ENCODE measurements at regions of chr17 and their contacts with region 1.

Region 1: GRCh38 chr17:61412143-61412859 is 12.7 kb downstream of the TBX2 start:
- DNase-seq: peak; percentile 70
- H3K4me3 ChIP-seq: peak overlapping the region; percentile 6 to 43 (median 31)
- H3K27ac ChIP-seq: no peak overlapping the region
- H3K4me1 ChIP-seq: peaks cover 14% of the 10 kb centered on the region
- H3K27me3 ChIP-seq: peaks cover 34 to 37% of the 10 kb centered on the region in 2 experiments
- CTCF ChIP-seq: peak; percentile 94 to 99
- POLR2A ChIP-seq: no peak

Region 2: GRCh38 chr17:60971515-60972369 is 440.6 kb before region 1 on chr17:
- CTCF ChIA-PET with region 1: interaction called, 24 read pairs
- POLR2A ChIA-PET with region 1: no interaction called
- dilution Hi-C with region 1: no loop called
- intact Hi-C with region 1: loop called (anchors 1 kb)
- DNase-seq: peak; percentile 56
- H3K4me3 ChIP-seq: no peak overlapping the region
- H3K27ac ChIP-seq: no peak overlapping the region
- H3K4me1 ChIP-seq: no peaks in the 10 kb centered on the region
- H3K27me3 ChIP-seq: no peaks in the 10 kb centered on the region
- CTCF ChIP-seq: peak; percentile 57 to 69
- POLR2A ChIP-seq: no peak

Region 3: DNA sequence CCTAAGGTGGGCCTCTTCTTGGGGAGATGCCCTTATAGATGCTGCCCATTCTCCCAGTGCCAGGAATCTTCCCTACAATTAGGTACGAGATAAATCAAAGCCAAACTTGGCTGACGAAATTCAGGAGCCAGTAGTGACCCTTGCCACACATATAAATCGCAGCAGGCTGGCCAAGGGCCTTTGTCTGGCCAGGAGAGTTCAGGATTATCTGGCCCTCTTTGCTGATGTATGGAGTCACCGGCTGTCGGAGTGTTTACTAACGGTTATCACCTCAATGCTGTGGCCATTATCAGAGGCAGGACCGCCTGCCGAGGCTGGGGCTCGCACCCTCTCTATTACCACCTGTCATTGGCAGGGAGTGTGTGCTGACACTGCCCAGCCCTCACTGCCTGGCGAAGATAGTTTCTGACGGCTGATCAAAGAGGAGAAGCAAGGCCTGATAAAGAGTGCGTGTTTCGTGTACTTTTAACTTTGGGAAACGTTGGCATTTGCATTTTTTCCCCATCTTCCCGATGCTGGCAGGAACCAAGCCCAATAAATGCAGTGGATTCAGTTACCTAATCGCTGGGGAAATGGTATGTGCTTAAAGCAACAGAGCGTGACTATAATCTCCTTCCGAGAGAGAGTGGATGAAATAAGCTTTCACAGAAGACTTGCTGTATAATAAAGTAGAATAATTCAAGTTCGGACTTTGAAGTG is 45.4 kb before region 1 on chr17:
- CTCF ChIA-PET with region 1: no interaction called
- POLR2A ChIA-PET with region 1: no interaction called
- dilution Hi-C with region 1: no loop called
- intact Hi-C with region 1: no loop called
- DNase-seq: no peak
- H3K4me3 ChIP-seq: no peak overlapping the region
- H3K27ac ChIP-seq: no peak overlapping the region
- H3K4me1 ChIP-seq: no peaks in the 10 kb centered on the region
- H3K27me3 ChIP-seq: peaks cover 3 to 13% of the 10 kb centered on the region in 2 experiments
- CTCF ChIP-seq: no peak
- POLR2A ChIP-seq: no peak

Region 4: GRCh38 chr17:61436273-61436672 is 24.0 kb after region 1 on chr17:
- CTCF ChIA-PET with region 1: no interaction called
- POLR2A ChIA-PET with region 1: no interaction called
- dilution Hi-C with region 1: no loop called
- intact Hi-C with region 1: no loop called
- DNase-seq: no peak
- H3K4me3 ChIP-seq: no peak overlapping the region
- H3K27ac ChIP-seq: no peak overlapping the region
- H3K4me1 ChIP-seq: no peaks in the 10 kb centered on the region
- H3K27me3 ChIP-seq: peaks cover 10% of the 10 kb centered on the region in 2 experiments
- CTCF ChIP-seq: no peak
- POLR2A ChIP-seq: no peak

Region 5: DNA sequence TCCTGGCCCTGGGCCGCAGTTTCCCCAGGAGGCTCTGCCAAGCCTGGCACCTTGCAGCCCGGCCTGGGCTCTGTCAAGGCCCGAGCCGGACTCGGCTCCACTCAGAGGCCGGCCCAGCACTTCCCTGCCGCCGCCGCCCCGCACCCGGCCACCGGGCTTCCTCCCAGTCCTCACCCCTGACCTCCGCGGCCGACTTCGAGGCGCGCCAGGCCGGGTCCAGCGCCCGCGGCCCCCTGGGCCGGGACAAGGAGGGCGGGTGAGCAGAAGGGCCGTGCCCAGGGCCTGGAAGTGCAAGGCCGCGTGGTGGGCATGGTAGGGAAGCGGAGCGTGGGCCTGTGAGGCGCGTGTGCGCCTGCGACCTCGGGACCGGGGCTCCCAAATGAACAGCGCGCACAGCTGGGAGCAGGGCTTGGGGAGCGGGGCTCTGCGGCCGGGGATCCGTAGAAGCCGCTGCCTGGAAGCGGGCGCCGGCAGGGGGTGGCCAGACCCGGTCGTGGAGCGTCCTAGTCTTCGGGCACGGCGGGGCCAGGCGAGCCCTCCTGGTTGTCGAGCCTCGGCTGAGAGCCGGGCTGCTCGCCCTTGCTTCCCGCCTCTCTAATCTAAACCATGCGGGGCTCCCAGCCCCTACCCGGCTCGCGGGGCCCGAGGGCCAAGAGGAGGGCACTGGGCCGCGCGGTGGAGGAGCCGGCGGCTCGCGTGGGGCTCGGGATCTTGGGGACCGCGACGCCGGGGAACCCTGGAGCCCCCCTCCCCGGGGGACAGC is 39.4 kb after region 1 on chr17:
- CTCF ChIA-PET with region 1: interaction called, 3 read pairs
- POLR2A ChIA-PET with region 1: no interaction called
- dilution Hi-C with region 1: no loop called
- intact Hi-C with region 1: loop called (anchors 2 kb)
- DNase-seq: no peak
- H3K4me3 ChIP-seq: no peak overlapping the region
- H3K27ac ChIP-seq: no peak overlapping the region
- H3K4me1 ChIP-seq: peaks cover 3% of the 10 kb centered on the region
- H3K27me3 ChIP-seq: peaks cover 68 to 90% of the 10 kb centered on the region in 2 experiments
- CTCF ChIP-seq: no peak
- POLR2A ChIP-seq: no peak

Region 6: GRCh38 chr17:61556224-61557188 is 144.2 kb after region 1 on chr17:
- CTCF ChIA-PET with region 1: interaction called, 18 read pairs
- POLR2A ChIA-PET with region 1: no interaction called
- dilution Hi-C with region 1: no loop called
- intact Hi-C with region 1: loop called (anchors 1 kb)
- DNase-seq: no peak
- H3K4me3 ChIP-seq: no peak overlapping the region
- H3K27ac ChIP-seq: no peak overlapping the region
- H3K4me1 ChIP-seq: no peaks in the 10 kb centered on the region
- H3K27me3 ChIP-seq: peaks cover 8 to 10% of the 10 kb centered on the region in 2 experiments
- CTCF ChIP-seq: no peak
- POLR2A ChIP-seq: no peak

Region 7: DNA sequence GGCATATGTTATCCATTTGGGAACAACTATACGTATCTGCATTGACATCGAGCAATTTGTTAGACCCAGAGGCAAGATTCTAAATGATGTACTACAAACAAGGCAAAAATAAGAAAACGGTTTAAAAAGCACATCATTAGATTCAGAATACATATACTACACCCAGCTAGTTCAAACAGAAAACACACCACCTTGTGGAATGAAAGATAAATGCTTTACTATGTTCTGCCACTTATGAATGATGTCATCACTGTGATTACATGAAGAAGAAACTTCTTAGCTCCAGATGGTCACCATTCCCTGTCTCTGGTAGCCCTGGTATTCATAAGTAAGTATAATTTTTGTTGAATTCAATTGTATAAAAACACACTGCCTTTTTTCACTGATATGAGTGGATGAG is 170.9 kb after region 1 on chr17:
- CTCF ChIA-PET with region 1: interaction called, 87 read pairs
- POLR2A ChIA-PET with region 1: interaction called, 3 read pairs
- dilution Hi-C with region 1: no loop called
- intact Hi-C with region 1: loop called (anchors 1 kb)
- DNase-seq: peak; percentile 36
- H3K4me3 ChIP-seq: no peak overlapping the region
- H3K27ac ChIP-seq: no peak overlapping the region
- H3K4me1 ChIP-seq: no peaks in the 10 kb centered on the region
- H3K27me3 ChIP-seq: peaks cover 11 to 30% of the 10 kb centered on the region in 2 experiments
- CTCF ChIP-seq: peak; percentile 11 to 25
- POLR2A ChIP-seq: no peak

Region 8: DNA sequence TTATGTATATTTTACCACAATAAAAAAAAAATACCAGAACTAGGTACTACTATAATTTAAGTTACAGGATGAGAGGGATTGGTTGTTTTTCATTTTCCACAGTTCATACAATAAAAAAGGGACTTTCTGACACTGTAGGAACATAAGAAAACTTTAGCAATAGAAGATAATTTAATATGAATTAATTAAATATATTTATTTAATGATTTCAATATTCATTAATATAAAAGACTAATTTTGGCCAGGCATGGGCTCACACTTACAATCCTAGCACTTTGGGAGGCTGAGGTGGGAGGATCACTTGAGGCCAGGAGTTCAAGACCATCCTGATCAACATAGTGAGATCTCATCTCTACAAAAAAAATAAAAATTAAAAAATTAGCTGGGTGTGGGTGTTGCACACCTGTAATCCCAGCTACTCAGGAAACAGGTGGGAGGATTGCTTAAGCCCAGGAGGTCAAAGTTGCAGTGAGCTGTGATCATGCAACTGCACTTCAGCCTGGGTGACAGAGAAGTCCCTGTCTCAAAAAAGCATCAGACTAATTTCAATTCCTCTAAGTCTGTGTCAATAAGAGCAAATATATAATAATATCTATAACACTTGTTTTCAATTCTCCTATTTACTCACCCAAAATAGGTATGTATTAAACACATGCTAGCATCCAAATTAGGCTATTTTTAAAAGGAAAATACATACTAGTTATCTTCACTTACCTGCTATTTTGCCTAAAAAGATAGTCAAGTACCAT is 371.4 kb after region 1 on chr17:
- CTCF ChIA-PET with region 1: no interaction called
- POLR2A ChIA-PET with region 1: no interaction called
- dilution Hi-C with region 1: no loop called
- intact Hi-C with region 1: no loop called
- DNase-seq: no peak
- H3K4me3 ChIP-seq: no peak overlapping the region
- H3K27ac ChIP-seq: no peak overlapping the region
- H3K4me1 ChIP-seq: no peaks in the 10 kb centered on the region
- H3K27me3 ChIP-seq: no peaks in the 10 kb centered on the region
- CTCF ChIP-seq: no peak
- POLR2A ChIP-seq: no peak

Region 9: DNA sequence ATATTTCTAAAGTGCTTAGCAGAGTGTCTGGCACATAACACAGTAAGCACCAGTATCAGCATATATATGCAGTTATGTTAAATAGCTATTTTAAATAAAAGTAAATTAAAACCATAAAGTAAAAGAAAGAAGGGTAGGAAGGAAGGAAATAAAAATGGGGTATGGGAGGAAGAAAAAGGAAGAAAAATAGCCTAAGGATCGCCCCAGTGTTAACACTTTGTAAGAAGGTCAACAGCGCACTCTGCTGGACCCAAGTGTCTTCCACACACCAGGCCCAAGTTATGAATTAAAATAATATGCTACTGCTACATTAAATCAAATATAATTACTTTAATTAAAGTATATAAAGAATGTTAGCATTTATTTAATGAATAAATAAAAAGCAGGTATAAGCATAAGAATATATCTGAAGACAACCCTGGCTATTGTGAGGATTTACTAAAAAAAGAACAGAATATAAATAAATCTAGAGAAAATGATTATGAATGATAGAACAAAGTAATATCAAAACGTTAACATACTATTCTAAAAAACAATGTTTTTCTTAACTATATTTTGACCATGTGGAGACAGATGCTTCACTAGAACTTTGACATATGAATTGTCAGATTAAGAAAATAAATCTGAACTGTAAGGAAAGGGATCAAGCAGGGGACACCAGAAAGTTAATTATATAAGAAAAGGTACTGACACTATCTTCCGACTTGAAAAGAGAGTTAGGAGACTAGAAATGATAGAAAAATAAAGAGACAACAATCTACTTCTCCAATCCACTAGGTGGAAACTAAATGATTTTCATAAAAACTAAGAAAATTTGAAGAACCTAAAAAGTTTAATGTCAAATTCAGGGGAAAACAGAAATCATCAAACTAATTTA is 425.1 kb after region 1 on chr17:
- CTCF ChIA-PET with region 1: interaction called, 20 read pairs
- POLR2A ChIA-PET with region 1: no interaction called
- dilution Hi-C with region 1: no loop called
- intact Hi-C with region 1: loop called (anchors 1 kb)
- DNase-seq: peak; percentile 76
- H3K4me3 ChIP-seq: no peak overlapping the region
- H3K27ac ChIP-seq: no peak overlapping the region
- H3K4me1 ChIP-seq: peaks cover 4% of the 10 kb centered on the region
- H3K27me3 ChIP-seq: no peaks in the 10 kb centered on the region
- CTCF ChIP-seq: peak; percentile 64 to 65
- POLR2A ChIP-seq: no peak

Region 10: DNA sequence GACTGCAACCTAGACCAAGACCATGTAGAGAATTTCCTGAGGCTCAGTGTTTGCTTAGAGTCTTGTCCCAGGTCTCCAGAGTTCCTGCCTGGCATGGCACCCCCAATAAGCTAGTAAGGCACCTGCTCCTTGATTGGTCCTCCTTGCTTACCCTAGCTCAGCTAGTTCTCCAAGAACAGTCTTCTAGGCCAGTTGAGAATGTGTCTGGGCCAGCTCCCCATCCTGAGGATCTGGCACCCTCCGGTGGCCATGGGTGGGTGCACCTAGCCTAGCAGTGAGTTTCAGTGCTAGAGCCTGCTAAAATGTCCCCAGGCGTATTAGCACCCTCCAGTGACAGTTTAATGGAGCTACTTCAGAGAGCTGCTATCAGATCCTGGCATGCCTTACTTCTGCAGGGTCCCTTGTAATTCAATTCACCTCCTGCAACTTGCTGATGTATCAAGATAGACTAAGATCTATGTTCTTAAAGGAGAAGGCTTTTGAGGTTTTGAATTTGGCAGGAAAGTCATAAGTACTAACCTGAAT is 697.1 kb after region 1 on chr17:
- CTCF ChIA-PET with region 1: interaction called, 12 read pairs
- POLR2A ChIA-PET with region 1: no interaction called
- dilution Hi-C with region 1: no loop called
- intact Hi-C with region 1: no loop called
- DNase-seq: peak; percentile 36
- H3K4me3 ChIP-seq: no peak overlapping the region
- H3K27ac ChIP-seq: no peak overlapping the region
- H3K4me1 ChIP-seq: no peaks in the 10 kb centered on the region
- H3K27me3 ChIP-seq: peaks cover 2 to 4% of the 10 kb centered on the region in 2 experiments
- CTCF ChIP-seq: peak; percentile 45 to 46
- POLR2A ChIP-seq: no peak